Left cardiac atrium (tissue), 4 donors: ENCODE measurements at regions of chr5 and their contacts with region 1.

Region 1: DNA sequence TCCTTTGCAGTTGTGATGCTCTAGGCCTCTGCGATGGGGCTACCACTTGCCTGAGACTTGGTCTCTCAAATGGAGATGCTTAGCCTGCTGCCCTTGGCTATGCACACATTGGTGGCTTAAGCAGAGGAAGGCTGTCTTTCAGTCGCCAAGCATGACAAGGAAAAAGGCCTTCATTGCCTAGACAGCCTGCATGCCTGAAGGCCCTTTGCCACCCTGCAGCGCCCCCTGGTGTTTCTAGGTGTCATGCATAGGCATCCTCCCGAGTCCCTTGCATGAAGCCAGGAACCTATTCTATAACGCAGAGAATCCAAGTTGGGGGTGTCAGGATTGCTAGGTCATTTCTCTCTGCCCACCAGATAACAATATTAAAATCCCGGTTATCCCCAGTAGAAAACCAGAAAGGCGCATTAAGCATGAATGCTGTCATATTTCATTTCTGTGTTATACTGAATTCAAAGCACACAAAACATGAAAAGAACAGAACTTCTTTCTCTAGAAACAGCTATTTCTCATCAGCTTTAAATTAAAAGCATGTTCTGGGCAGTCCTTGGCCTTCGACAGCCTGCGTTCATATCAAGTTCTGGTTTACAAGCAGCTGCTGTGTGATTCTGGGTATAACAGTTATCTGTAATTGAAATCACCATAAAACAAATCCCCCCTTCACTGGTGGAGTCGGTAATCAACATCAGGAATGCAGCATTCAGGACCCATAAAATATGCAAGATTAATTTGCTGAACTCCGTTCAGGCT is 59.7 kb upstream of the TRPC7 start:
- DNase-seq: peak; percentile 75
- ATAC-seq: peak in 1 of 2 donors; percentile 69

Region 2: GRCh38 chr5:136242611-136243010 is 182.4 kb before region 1 on chr5:
- intact Hi-C with region 1: loop called (anchors 5 to 10 kb)
- DNase-seq: no peak
- ATAC-seq: no peak

Region 3: GRCh38 chr5:136375920-136376319 is 49.1 kb before region 1 on chr5:
- intact Hi-C with region 1: no loop called
- DNase-seq: no peak
- ATAC-seq: no peak